Prostate gland (tissue), 2 donors: ENCODE measurements at regions of chr11 and their contacts with region 1.

Region 1: GRCh38 chr11:117443266-117444195 is 115.9 kb downstream of the CEP164 start:
- DNase-seq: peak; percentile 17
- H3K4me3 ChIP-seq: no peak overlapping the region
- H3K27ac ChIP-seq: no peak overlapping the region
- H3K4me1 ChIP-seq: no peaks in the 10 kb centered on the region
- H3K27me3 ChIP-seq: peaks cover 2% of the 10 kb centered on the region
- CTCF ChIP-seq: peak in 3 of 4 experiments; percentile 29 to 50 (median 44)
- POLR2A ChIP-seq: no peak

Region 2: GRCh38 chr11:117799634-117800033 is 356.1 kb after region 1 on chr11:
- intact Hi-C with region 1: loop called (anchors 5 kb)
- DNase-seq: no peak
- H3K4me3 ChIP-seq: no peak overlapping the region
- H3K27ac ChIP-seq: no peak overlapping the region
- H3K4me1 ChIP-seq: peaks cover 8% of the 10 kb centered on the region
- H3K27me3 ChIP-seq: peaks cover 17% of the 10 kb centered on the region
- CTCF ChIP-seq: no peak
- POLR2A ChIP-seq: no peak

Region 3: GRCh38 chr11:117817368-117818040 is 374.0 kb after region 1 on chr11:
- intact Hi-C with region 1: loop called (anchors 5 kb)
- DNase-seq: peak; percentile 57
- H3K4me3 ChIP-seq: no peak overlapping the region
- H3K27ac ChIP-seq: peak overlapping the region in 1 of 2 donors; percentile 13
- H3K4me1 ChIP-seq: peaks cover 5% of the 10 kb centered on the region
- H3K27me3 ChIP-seq: no peaks in the 10 kb centered on the region
- CTCF ChIP-seq: peak; percentile 97 to 99 (median 98)
- POLR2A ChIP-seq: no peak

Region 4: DNA sequence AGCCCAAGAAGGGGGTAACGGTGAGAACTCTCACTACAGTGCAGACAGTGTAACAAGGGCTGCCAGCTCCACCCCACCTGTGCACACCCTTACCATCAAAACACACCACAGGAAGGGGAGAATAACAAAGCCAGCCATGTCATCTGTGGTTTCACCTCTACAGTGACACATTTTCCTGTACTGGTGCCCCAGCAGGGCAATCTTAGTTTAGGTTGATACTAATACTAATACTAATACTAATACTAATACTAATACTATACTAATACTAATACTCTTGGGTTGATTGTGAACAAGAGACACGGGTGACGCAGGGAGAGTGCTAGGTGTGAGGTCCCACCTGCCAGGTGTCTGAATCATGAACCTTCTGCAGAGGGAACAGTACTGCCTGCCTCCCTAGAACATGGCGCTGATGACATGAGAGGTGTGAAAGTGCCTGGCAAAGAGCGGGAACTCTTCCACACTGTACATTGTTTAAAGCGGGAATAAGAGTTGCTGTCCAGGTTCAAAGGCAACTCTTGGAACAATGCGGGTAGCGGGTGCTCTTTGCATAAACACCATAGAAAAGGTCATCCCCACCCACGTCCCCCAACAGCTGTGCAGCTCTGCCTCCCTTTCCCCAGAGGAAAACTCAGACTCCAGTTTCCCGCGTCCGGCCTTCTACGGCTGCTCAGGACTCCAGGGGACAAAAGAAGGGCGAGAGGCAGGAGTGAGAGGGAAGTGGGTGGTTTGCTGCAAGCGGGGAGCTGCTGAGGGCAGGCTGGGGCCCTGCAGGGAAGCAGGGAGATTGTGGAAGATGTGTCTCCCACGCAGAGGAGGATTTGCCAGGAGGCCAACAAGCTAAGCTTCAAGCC is 608.3 kb after region 1 on chr11:
- intact Hi-C with region 1: loop called (anchors 10 kb)
- DNase-seq: no peak
- H3K4me3 ChIP-seq: no peak overlapping the region
- H3K27ac ChIP-seq: no peak overlapping the region
- H3K4me1 ChIP-seq: no peaks in the 10 kb centered on the region
- H3K27me3 ChIP-seq: no peaks in the 10 kb centered on the region
- CTCF ChIP-seq: no peak
- POLR2A ChIP-seq: no peak

Region 5: DNA sequence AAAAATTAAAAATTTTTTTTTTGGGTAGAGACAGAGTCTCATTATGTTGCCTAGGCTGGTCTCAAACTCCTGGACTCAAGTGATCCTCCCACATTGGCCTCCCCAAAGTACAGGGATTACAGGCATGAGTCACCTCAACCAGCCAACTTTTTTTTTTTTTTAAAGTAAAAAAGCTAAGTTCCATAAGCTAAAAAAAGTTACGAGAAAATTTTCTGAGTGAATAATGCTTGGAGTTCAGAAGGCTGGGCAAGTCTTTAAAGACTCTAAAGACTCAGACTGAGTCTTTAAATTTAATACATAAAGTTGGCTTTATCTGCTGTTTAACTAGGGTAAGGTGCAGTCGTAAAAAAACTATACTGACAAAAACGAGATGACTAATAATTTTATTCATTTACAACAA is 1341.8 kb after region 1 on chr11:
- intact Hi-C with region 1: no loop called
- DNase-seq: no peak
- H3K4me3 ChIP-seq: no peak overlapping the region
- H3K27ac ChIP-seq: no peak overlapping the region
- H3K4me1 ChIP-seq: peaks cover 19% of the 10 kb centered on the region
- H3K27me3 ChIP-seq: no peaks in the 10 kb centered on the region
- CTCF ChIP-seq: no peak
- POLR2A ChIP-seq: no peak